Heart right ventricle (tissue), 16 donors: ENCODE measurements at regions of chr2 and their contacts with region 1.

Region 1: GRCh38 chr2:175282290-175282689 is 100.8 kb upstream of the ATP5MC3 start:
- DNase-seq: no peak
- ATAC-seq: peak in 5 of 8 donors; percentile 42 to 69 (median 52)
- H3K4me3 ChIP-seq: no peak overlapping the region
- H3K27ac ChIP-seq: no peak overlapping the region
- H3K4me1 ChIP-seq: no peaks in the 10 kb centered on the region
- H3K27me3 ChIP-seq: peaks cover 0 to 7% (median 0%) of the 10 kb centered on the region in 7 donors
- CTCF ChIP-seq: peak in 8 of 9 donors; percentile 24 to 65 (median 55)

Region 2: GRCh38 chr2:175030380-175031271 is 251.7 kb before region 1 on chr2:
- intact Hi-C with region 1: loop called in 3 of 10 experiments (anchors 5 to 10 kb)
- DNase-seq: no peak
- ATAC-seq: peak in 5 of 8 donors; percentile 48 to 82 (median 74)
- H3K4me3 ChIP-seq: no peak overlapping the region
- H3K27ac ChIP-seq: no peak overlapping the region
- H3K4me1 ChIP-seq: no peaks in the 10 kb centered on the region
- H3K27me3 ChIP-seq: no peaks in the 10 kb centered on the region
- CTCF ChIP-seq: peak in 7 of 9 donors; percentile 23 to 52 (median 39)

Region 3: GRCh38 chr2:175535631-175536030 is 253.3 kb after region 1 on chr2:
- intact Hi-C with region 1: no loop called
- DNase-seq: no peak
- ATAC-seq: no peak
- H3K4me3 ChIP-seq: no peak overlapping the region
- H3K27ac ChIP-seq: no peak overlapping the region
- H3K4me1 ChIP-seq: no peaks in the 10 kb centered on the region
- H3K27me3 ChIP-seq: peaks cover 0 to 4% (median 0%) of the 10 kb centered on the region in 7 donors
- CTCF ChIP-seq: no peak